PC-9 (cell line): ENCODE measurements at regions of chr5 and their contacts with region 1.

Region 1: GRCh38 chr5:84382363-84383295 is 2.1 kb downstream of the EDIL3 start:
- DNase-seq: peak in 1 of 2 experiments; percentile 47
- H3K4me3 ChIP-seq: no peak overlapping the region
- H3K27ac ChIP-seq: no peak overlapping the region
- H3K4me1 ChIP-seq: 0 out of 2 replicates have a peak, but pooled peaks cover 6% of the 10 kb centered on the region
- H3K27me3 ChIP-seq: no peaks in the 10 kb centered on the region
- CTCF ChIP-seq: no peak

Region 2: DNA sequence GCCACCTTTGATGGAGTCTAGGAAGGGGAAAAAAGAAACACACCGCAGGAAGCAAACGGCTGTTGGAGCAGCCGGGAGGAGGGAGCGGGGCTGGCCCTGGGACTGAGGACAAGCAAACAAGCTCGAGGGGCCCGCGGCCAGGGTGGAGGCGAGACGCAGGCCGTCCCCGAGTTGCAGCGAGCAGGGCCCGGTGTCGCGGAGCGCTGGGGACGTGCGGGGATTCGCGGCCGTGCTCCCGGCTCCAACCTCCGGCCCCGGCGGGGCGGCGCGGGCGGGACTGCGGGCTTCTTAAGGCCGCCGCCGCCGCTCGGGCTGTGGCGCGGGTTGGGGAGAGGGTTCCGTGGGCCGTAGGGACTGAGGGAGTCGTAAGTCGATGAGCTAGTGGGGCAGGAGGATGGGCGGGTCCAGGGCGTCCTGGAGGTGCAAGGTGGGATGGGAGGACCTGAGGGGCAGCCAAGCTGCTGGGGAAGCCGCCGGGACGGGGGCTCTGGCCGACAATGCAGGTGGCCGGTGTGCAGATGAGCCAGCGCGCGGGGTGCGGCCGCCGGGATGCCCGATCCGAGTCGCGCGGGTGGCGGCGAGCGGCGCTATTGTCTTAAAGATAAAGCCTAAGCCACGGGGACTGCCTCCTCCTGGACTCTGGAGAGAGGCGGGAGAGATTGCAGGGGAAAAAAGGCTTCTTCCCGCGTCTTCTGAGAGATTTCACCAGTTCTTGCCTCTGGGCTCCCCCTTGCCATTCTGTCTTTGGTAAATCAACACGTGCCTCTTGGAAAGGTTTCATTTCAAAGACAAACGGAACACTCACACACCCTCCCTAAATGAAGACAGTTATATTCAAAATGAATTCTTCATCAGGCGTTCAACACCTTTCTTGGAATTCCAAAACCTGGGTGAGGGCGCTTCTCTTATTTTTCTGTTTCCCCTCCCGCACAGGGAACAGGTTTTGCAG is 660.4 kb before region 1 on chr5:
- CTCF ChIA-PET with region 1: no interaction called
- POLR2A ChIA-PET with region 1: no interaction called
- intact Hi-C with region 1: loop called (anchors 10 kb)
- DNase-seq: peak in 1 of 2 experiments; percentile 78
- H3K4me3 ChIP-seq: peak overlapping the region; percentile 67
- H3K27ac ChIP-seq: no peak overlapping the region
- H3K4me1 ChIP-seq: 0 out of 2 replicates have a peak, but pooled peaks cover 4% of the 10 kb centered on the region
- H3K27me3 ChIP-seq: no peaks in the 10 kb centered on the region; the same call in 1 of the 2 replicates
- CTCF ChIP-seq: peak; percentile 42

Region 3: GRCh38 chr5:84249918-84250630 is 132.6 kb before region 1 on chr5:
- CTCF ChIA-PET with region 1: no interaction called
- POLR2A ChIA-PET with region 1: no interaction called
- intact Hi-C with region 1: no loop called
- DNase-seq: no peak
- H3K4me3 ChIP-seq: no peak overlapping the region
- H3K27ac ChIP-seq: no peak overlapping the region
- H3K4me1 ChIP-seq: peaks cover 12% of the 10 kb centered on the region; the same call in 1 of the 2 replicates
- H3K27me3 ChIP-seq: no peaks in the 10 kb centered on the region
- CTCF ChIP-seq: no peak

Region 4: GRCh38 chr5:84287951-84288350 is 94.7 kb before region 1 on chr5:
- CTCF ChIA-PET with region 1: no interaction called
- POLR2A ChIA-PET with region 1: no interaction called
- intact Hi-C with region 1: loop called (anchors 5 kb)
- DNase-seq: peak; percentile 43 to 62
- H3K4me3 ChIP-seq: no peak overlapping the region
- H3K27ac ChIP-seq: peak overlapping the region; percentile 6; the same call in 1 of the 2 replicates
- H3K4me1 ChIP-seq: peaks cover 14% of the 10 kb centered on the region
- H3K27me3 ChIP-seq: no peaks in the 10 kb centered on the region
- CTCF ChIP-seq: no peak

Region 5: DNA sequence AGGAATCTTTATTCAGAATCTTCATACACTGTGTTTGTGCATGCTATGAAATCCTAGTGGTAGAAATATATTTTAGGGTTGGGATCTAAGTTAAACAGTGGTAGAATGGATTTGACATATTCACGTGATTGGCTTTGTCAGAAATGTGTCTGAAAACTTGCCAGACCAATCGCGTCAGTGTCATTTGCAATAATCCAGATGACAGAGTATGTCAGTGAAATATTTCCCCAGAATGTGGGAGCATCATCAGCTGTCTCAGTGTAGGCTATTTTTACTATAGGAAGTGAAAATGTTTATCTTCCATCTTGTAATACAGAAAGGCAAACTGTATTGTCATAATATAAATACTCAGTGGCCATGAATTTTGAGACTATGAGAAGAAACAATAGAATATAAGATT is 222.6 kb after region 1 on chr5:
- CTCF ChIA-PET with region 1: no interaction called
- POLR2A ChIA-PET with region 1: no interaction called
- intact Hi-C with region 1: no loop called
- DNase-seq: no peak
- H3K4me3 ChIP-seq: no peak overlapping the region
- H3K27ac ChIP-seq: no peak overlapping the region
- H3K4me1 ChIP-seq: no peaks in the 10 kb centered on the region
- H3K27me3 ChIP-seq: no peaks in the 10 kb centered on the region
- CTCF ChIP-seq: no peak

Region 6: DNA sequence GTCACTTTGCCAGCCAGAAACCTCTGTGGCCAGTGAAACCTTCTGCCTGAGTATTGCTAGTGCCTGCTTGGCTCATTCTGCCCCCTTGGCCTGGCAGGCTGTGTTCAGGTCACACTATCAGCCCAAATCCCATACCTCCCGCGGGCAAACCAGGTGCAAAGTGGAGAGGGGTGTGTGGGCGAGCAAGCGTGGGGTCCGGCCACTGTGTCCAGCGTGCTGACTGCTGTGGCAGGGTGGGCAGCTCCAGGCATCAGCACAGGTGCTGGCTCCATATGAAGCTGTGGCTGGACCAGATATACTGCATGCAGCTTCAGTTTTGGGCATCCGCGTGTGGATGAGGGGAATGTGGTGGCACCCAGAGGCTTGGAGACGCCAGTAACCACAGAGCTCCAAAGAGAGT is 578.6 kb after region 1 on chr5:
- CTCF ChIA-PET with region 1: interaction called, 10 read pairs
- POLR2A ChIA-PET with region 1: no interaction called
- intact Hi-C with region 1: no loop called
- DNase-seq: no peak
- H3K4me3 ChIP-seq: no peak overlapping the region
- H3K27ac ChIP-seq: no peak overlapping the region
- H3K4me1 ChIP-seq: no peaks in the 10 kb centered on the region
- H3K27me3 ChIP-seq: no peaks in the 10 kb centered on the region
- CTCF ChIP-seq: no peak